ENCODE measurements at regions of chr2 and their contacts with region 1.

Region 1: DNA sequence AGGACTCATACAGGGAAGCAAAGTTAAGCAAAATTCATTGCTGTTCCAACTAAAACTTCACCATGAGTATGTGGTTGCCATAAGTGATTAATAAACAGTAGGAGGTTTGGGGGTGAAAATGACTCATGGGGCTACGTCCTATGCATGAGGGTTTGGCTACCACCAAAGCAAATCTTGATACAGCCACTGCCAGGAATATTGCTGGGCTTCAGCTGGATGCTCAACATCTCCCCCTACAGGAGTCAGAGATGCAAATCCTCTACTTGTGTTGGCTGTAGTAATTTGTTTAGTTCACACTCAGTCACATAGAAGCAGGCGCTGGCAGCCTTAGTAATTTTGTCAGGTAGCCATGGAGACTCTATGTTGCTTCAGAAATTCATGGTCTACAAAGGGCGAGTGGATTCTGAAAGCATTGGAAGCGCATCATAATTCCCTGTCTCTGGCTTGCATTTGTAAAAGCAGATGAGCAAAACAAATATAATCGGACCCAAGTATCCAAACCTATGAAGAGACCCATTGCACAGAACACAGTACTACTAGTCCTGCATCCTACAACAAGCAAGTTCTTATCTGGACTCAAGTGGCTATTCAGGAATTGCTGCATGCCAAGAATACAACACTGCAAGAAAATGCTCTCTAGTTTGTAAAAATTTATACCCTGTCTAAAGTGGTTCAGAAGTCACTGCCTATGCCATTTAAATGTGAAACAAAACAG is 76.0 kb downstream of the CD28 start:
- DNase-seq: peak; percentile 86
- H3K4me3 Mint-ChIP-seq: no peak overlapping the region
- H3K27ac Mint-ChIP-seq: peak overlapping the region; percentile 57
- H3K4me1 Mint-ChIP-seq: peaks cover 45% of the 10 kb centered on the region
- H3K27me3 Mint-ChIP-seq: no peaks in the 10 kb centered on the region

Region 2: DNA sequence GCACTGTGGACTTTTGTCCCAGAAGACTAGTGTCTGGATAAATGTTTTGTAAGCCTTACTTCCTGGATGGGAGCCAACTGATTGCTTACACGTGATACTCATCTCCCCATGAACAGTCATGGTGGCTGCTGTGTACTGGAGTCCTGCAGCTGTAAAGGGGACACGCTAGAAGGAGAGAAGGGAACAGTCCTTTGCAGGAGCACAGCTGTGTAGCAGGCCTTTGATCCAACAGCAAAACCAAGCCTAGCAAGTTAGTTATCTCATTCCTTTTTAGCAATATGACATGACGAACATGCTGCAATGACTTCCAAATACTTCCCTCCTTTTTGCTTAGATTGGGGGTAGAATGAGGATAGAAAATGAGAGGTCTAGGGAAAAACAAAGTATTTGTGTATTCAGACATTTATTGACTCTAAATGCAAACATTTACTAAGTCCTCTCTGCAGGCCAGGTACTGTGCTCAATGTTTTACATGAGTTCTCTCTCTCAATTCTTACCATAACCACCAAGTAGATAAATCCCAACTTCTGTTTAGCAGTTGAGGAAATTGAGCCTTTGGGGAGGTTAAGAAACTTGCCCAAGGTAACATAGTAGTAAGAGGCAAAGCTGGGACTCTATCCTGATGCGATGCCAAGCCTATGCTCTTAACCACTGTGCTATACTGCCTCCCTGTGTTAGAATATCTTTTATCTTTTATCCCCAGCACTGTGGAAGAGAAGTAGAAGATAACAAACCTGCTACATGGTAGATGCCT is 131.4 kb before region 1 on chr2:
- CTCF ChIA-PET with region 1: no interaction called
- POLR2A ChIA-PET with region 1: no interaction called
- intact Hi-C with region 1: loop called (anchors 1 kb)
- DNase-seq: no peak
- H3K4me3 Mint-ChIP-seq: no peak overlapping the region
- H3K27ac Mint-ChIP-seq: no peak overlapping the region
- H3K4me1 Mint-ChIP-seq: peaks cover 13% of the 10 kb centered on the region
- H3K27me3 Mint-ChIP-seq: no peaks in the 10 kb centered on the region

Region 3: DNA sequence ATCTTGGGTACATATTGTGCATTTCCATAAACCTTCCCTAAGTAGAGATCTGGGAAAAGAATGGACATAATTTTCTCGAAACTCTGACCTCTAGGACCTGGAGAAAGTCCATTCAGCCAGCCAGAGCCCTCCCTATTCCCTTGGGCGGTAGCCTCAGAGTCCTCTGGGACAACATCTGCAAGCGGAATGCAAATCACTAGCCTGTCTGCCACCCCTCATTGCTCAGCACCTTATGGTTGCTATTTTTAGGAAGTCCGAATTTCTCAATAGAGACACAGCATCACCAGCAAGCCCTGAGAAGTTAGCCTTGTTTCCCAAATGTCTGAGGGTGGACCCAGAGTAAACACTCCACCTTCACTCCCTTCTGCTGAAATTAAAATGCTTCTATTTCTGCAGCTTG is 93.6 kb before region 1 on chr2:
- CTCF ChIA-PET with region 1: no interaction called
- POLR2A ChIA-PET with region 1: no interaction called
- intact Hi-C with region 1: no loop called
- DNase-seq: no peak
- H3K4me3 Mint-ChIP-seq: no peak overlapping the region
- H3K27ac Mint-ChIP-seq: no peak overlapping the region
- H3K4me1 Mint-ChIP-seq: peaks cover 18% of the 10 kb centered on the region
- H3K27me3 Mint-ChIP-seq: no peaks in the 10 kb centered on the region

Region 4: DNA sequence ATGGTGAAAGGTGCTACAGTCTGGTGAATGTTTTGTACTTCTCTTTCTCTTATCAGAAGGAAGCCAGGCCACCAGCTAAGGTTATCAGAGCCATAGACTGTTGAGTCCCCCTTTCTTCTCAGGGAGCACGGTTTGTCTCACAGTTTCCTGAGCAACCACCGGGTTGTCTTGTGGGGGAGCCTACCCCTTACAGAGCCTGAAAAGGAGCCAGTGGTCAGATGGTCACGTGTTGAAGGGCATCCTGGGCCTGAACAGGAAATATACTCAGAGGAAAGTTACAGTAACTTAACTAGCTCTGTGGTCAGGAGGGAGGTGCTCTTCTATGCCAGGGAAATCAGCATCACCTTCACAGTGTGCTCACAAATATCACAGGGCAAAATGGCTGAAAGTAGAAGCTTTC is 64.3 kb before region 1 on chr2:
- CTCF ChIA-PET with region 1: no interaction called
- POLR2A ChIA-PET with region 1: interaction called, 5 read pairs
- intact Hi-C with region 1: loop called (anchors 1 kb)
- DNase-seq: peak; percentile 85
- H3K4me3 Mint-ChIP-seq: peak overlapping the region; percentile 69
- H3K27ac Mint-ChIP-seq: peak overlapping the region; percentile 94
- H3K4me1 Mint-ChIP-seq: peaks cover 96% of the 10 kb centered on the region
- H3K27me3 Mint-ChIP-seq: no peaks in the 10 kb centered on the region

Region 5: DNA sequence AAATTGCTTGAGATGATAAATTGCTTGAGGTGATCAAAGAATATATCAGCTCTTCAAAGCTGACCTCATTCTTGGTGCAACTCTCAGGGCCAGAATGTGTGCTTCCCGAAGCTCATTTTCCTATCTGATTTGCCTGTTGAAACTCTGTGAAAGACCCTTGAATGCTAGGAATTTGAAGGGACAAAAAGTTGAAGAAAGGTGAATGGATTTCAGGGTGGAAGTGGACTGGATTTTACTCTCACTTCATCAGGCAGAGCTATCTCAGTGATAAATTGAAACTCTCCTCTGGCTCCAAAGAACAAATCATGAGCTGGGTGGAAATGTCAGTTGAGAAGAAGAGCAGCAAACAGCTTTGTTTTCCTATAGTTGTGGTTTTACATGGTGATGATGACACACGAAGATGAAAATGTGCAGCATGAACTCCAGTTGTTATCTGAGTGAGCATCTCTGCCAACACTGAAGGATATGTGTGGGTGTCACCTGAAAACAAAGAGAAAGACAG is 41.6 kb before region 1 on chr2:
- CTCF ChIA-PET with region 1: interaction called, 7 read pairs
- POLR2A ChIA-PET with region 1: interaction called, 8 read pairs
- intact Hi-C with region 1: loop called (anchors 1 kb)
- DNase-seq: peak; percentile 65
- H3K4me3 Mint-ChIP-seq: peak overlapping the region; percentile 58
- H3K27ac Mint-ChIP-seq: peak overlapping the region; percentile 99
- H3K4me1 Mint-ChIP-seq: peaks cover 90% of the 10 kb centered on the region
- H3K27me3 Mint-ChIP-seq: no peaks in the 10 kb centered on the region

Region 6: DNA sequence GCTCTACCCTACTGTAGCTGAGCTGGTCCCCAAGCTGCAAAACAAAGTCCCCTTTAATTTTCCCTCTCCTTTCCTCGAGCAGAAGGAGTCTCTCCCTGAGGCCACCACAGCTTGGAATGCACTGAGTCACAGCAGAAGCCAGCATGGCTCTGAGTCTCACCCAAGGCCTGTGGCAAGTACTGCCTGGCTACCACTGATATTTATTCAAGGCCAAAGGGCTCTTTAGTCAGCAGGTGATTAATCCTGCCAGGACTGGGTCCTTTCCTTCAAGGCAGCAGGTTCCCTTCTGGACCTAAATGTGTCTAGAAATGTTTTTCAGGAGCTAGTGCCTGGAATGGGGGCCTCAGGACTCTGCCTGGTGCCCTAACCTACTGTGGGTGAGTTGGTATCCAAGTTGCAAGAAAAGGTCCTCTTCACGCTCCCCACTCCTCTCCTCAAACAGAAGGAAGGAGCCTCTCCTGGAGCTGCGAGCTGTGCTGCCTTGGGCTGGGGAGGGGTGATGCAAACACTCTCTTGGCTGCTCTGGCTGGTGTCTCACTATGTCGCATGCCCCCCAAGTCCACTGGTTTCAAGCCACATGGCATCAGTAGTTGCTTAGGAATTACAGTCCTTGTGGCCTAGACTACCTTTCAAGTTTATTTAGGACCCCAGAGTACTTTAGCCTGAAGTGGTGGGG is 22.6 kb before region 1 on chr2:
- CTCF ChIA-PET with region 1: interaction called, 8 read pairs
- POLR2A ChIA-PET with region 1: interaction called, 3 read pairs
- intact Hi-C with region 1: loop called (anchors 1 kb)
- DNase-seq: no peak
- H3K4me3 Mint-ChIP-seq: no peak overlapping the region
- H3K27ac Mint-ChIP-seq: no peak overlapping the region
- H3K4me1 Mint-ChIP-seq: peaks cover 63% of the 10 kb centered on the region
- H3K27me3 Mint-ChIP-seq: no peaks in the 10 kb centered on the region

Region 7: DNA sequence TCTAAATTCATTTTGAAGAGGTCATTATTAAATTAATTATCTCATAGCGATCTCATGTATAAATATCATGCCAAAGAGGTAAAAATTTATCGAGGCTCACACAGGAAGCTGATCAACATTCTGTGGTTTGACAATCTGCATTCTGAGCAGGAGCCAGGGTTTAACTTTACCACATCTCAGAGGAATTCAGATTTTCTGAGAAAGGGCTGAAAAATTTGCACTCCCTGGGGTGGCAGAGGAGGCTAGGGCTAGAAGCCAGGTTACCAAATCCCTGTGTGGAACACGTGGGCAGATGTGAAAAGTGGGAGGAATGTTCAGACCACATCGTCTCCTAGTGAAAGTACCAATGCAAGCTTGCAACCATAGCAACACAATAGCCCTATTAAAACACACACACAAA is 21.7 kb after region 1 on chr2:
- CTCF ChIA-PET with region 1: interaction called, 8 read pairs
- POLR2A ChIA-PET with region 1: no interaction called
- intact Hi-C with region 1: loop called (anchors 1 kb)
- DNase-seq: peak; percentile 63
- H3K4me3 Mint-ChIP-seq: no peak overlapping the region
- H3K27ac Mint-ChIP-seq: peak overlapping the region; percentile 11
- H3K4me1 Mint-ChIP-seq: peaks cover 83% of the 10 kb centered on the region
- H3K27me3 Mint-ChIP-seq: no peaks in the 10 kb centered on the region

Region 8: DNA sequence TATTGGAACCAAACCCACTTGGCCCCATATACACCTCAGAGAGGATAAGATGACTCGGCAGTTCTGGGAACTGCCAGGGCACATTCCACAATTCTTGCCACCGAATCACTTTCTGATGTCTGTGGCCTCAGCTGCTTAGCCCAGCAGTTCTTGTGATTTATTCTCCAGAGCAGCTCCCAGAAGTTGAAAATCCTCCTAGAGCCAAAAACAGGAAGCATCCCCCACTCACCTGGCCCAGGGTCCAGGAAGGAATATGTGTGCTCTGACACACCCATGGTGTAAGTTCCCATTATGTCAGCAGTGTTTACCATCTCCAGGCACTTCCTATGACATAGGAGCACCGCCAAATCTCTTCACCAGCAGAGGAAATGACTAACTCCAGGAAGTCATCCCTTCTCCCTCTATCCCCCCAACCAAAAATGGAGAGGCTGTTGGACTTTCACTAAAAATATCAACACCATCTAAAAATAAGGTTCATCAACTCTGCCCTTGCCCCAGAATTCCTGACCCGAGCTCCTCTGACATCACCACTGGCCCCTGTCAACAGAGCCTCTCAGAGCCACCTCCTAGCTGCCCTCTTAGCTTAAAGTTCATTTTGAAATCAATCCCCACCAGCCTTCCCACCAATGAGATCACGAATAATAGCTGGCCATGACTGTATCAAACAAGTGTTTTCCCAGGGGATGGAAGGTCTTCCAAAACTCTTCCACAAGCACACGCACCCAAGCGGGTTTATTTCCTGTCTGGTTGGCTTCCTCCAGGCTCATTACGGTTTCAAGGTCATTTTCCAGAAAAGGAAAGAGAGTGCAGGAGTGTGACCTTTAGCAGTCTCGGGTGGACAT is 539.7 kb after region 1 on chr2:
- CTCF ChIA-PET with region 1: no interaction called
- POLR2A ChIA-PET with region 1: no interaction called
- intact Hi-C with region 1: no loop called
- DNase-seq: no peak
- H3K4me3 Mint-ChIP-seq: no peak overlapping the region
- H3K27ac Mint-ChIP-seq: no peak overlapping the region
- H3K4me1 Mint-ChIP-seq: no peaks in the 10 kb centered on the region
- H3K27me3 Mint-ChIP-seq: peaks cover 15% of the 10 kb centered on the region

Measured in activated CD4-positive, alpha-beta memory T cell treated with anti-CD3 and anti-CD28 coated beads for 36 hours (primary cell).